Sigmoid colon (tissue), 7 donors: ENCODE measurements at regions of chr10 and their contacts with region 1.

Region 1: GRCh38 chr10:84537447-84537931 is 209.1 kb downstream of the CCSER2 start:
- DNase-seq: no peak
- H3K4me3 ChIP-seq: no peak overlapping the region
- H3K27ac ChIP-seq: no peak overlapping the region
- H3K4me1 ChIP-seq: peaks cover 0 to 13% (median 10%) of the 10 kb centered on the region in 4 donors
- H3K27me3 ChIP-seq: peaks cover 0 to 15% (median 0%) of the 10 kb centered on the region in 3 donors
- CTCF ChIP-seq: peak; percentile 32 to 84 (median 80)
- EP300 ChIP-seq: no peak
- POLR2A ChIP-seq: no peak

Region 2: DNA sequence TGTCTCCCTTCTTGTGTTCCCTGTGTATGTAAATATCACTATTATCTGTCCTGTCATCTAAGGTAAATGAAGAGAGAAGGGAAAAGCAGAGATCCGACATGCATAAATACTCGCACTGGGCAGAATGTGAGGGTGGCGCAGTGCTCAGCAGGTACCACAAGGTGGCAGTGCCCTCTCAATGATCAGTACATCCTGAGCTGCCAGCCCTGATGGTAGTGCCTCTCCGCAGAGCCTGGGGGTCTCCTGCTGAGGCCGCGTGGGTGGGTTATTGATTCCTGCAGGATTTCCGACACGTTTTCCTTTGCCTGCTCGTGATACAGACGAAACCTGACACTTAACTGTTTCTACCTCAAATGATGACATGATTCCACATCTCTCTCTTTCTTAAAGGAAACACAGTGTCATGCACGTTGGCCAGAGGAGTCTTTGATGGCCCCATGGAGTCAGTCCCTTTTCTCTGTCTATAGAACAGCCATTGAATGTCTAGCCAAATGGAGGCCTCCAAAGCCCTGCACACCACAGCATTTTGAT is 272.8 kb before region 1 on chr10:
- intact Hi-C with region 1: loop called (anchors 1 kb)
- DNase-seq: peak; percentile 75
- H3K4me3 ChIP-seq: no peak overlapping the region
- H3K27ac ChIP-seq: no peak overlapping the region
- H3K4me1 ChIP-seq: no peaks in the 10 kb centered on the region
- H3K27me3 ChIP-seq: peaks cover 0 to 14% (median 0%) of the 10 kb centered on the region in 3 donors
- CTCF ChIP-seq: peak; percentile 55 to 91 (median 82)
- EP300 ChIP-seq: no peak
- POLR2A ChIP-seq: no peak

Region 3: DNA sequence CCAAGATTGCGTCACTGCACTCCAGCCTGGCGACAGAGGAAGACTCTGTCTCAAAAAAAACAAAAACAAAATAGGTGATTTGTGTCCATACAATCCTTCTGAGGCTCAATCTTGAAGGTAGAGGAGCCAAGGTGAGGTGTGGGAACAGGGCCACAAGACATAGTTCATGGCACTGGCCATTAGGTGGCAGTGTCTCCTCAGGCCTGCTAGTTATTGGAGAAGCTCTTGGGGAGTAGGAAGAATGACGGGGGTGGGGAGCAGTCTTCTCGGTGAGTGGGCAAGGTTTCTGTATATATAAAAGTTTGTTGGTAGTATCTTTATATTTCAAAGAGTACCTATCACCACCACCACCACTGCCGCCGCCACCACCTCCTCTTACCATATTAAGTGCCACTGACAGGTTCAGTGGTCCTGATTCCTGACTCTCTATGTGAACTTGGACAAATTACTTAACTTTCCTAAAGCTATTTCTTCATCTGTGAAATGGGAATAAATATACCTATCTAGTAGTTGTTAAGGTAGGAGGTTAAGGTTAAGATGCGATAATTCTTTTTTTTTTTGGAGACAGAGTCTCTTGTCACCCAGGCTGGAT is 185.1 kb before region 1 on chr10:
- intact Hi-C with region 1: loop called (anchors 1 kb)
- DNase-seq: peak; percentile 67
- H3K4me3 ChIP-seq: no peak overlapping the region
- H3K27ac ChIP-seq: no peak overlapping the region
- H3K4me1 ChIP-seq: peaks cover 0 to 46% (median 25%) of the 10 kb centered on the region in 4 donors
- H3K27me3 ChIP-seq: no peaks in the 10 kb centered on the region
- CTCF ChIP-seq: peak in 3 of 4 experiments; percentile 44 to 74 (median 66)
- EP300 ChIP-seq: no peak
- POLR2A ChIP-seq: no peak

Region 4: GRCh38 chr10:84375011-84375410 is 162.5 kb before region 1 on chr10:
- intact Hi-C with region 1: loop called (anchors 1 kb)
- DNase-seq: no peak
- H3K4me3 ChIP-seq: no peak overlapping the region
- H3K27ac ChIP-seq: no peak overlapping the region
- H3K4me1 ChIP-seq: peaks cover 0 to 3% (median 0%) of the 10 kb centered on the region in 4 donors
- H3K27me3 ChIP-seq: no peaks in the 10 kb centered on the region
- CTCF ChIP-seq: peak; percentile 49 to 73 (median 63)
- EP300 ChIP-seq: no peak
- POLR2A ChIP-seq: no peak

Region 5: DNA sequence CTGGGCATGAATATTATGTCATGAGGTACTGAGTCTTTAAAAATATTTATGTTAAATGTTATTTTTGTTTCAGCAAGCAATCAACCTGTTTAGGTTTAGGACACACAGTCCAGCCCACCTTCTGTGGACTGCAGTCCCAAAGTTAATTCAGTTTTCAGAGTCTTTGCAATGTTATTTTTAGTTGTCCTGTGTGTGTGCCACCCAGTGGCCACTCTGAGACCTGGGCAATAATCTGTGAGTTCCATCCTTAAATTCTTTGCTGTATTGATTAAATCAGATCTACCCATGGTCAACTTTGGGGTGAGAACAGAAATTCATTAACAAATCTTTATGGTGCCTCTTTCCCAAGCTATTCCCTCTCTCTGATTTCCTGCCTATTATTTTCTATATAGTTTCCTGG is 206.0 kb after region 1 on chr10:
- intact Hi-C with region 1: loop called (anchors 5 kb)
- DNase-seq: no peak
- H3K4me3 ChIP-seq: no peak overlapping the region
- H3K27ac ChIP-seq: no peak overlapping the region
- H3K4me1 ChIP-seq: no peaks in the 10 kb centered on the region
- H3K27me3 ChIP-seq: no peaks in the 10 kb centered on the region
- CTCF ChIP-seq: peak in 1 of 4 experiments; percentile 30
- EP300 ChIP-seq: no peak
- POLR2A ChIP-seq: no peak

Region 6: GRCh38 chr10:85734791-85735190 is 1197.3 kb after region 1 on chr10:
- intact Hi-C with region 1: no loop called
- DNase-seq: no peak
- H3K4me3 ChIP-seq: no peak overlapping the region
- H3K27ac ChIP-seq: no peak overlapping the region
- H3K4me1 ChIP-seq: no peaks in the 10 kb centered on the region
- H3K27me3 ChIP-seq: no peaks in the 10 kb centered on the region
- CTCF ChIP-seq: no peak
- EP300 ChIP-seq: no peak
- POLR2A ChIP-seq: no peak

Region 7: DNA sequence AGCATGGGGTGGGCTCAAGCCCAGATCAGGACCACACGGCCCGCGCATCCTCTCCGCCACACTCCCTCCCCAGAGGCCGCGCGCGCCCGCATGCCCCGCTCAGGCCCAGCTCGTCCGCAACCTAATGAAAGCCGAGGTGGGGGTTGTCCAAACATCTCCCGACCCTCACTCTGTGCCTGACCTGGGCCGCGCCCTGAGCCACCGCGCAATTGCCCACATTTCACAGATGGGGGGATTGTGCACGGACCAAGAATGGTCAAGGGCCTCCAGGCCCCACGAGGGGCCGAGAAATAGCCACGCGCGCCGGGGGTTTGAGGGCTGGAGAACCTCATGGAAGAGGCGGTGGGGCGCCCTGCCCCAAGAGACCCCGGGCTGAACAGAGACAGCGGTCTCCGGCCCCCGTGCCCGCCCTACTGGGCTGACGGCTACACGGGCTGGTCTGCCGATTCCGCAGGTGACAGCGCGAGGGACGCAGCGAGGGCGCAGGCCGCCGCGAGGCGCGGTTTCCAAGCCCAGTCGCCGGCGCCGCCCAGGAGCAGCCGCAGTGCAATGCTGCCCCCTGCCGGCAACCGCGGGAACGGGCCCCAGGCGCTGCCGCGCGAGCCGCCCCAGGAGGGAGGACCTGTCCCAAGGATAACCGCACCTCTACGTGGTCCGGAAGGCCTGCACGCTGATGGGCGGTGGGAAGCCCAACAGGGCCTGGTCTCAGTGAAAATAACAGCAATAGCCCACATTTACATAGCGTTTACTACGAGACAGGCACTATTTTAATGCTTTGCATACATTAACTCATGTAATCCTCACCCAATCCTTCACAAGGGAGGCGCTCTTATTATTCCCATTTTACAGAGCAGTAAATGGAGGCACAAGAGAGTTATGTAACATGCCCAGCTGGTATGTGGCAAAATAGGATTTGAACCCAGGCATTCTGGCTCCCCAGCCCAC is 1839.6 kb after region 1 on chr10:
- intact Hi-C with region 1: loop called (anchors 2 kb)
- DNase-seq: peak; percentile 82
- H3K4me3 ChIP-seq: peak overlapping the region in 3 of 4 donors; percentile 12 to 35 (median 34)
- H3K27ac ChIP-seq: no peak overlapping the region
- H3K4me1 ChIP-seq: peaks cover 0 to 8% (median 7%) of the 10 kb centered on the region in 4 donors
- H3K27me3 ChIP-seq: peaks cover 4 to 63% (median 35%) of the 10 kb centered on the region in 3 donors
- CTCF ChIP-seq: peak; percentile 66 to 99 (median 86)
- EP300 ChIP-seq: no peak
- POLR2A ChIP-seq: no peak